PC-3 (cell line): ENCODE measurements at regions of chr21 and their contacts with region 1.

Region 1: DNA sequence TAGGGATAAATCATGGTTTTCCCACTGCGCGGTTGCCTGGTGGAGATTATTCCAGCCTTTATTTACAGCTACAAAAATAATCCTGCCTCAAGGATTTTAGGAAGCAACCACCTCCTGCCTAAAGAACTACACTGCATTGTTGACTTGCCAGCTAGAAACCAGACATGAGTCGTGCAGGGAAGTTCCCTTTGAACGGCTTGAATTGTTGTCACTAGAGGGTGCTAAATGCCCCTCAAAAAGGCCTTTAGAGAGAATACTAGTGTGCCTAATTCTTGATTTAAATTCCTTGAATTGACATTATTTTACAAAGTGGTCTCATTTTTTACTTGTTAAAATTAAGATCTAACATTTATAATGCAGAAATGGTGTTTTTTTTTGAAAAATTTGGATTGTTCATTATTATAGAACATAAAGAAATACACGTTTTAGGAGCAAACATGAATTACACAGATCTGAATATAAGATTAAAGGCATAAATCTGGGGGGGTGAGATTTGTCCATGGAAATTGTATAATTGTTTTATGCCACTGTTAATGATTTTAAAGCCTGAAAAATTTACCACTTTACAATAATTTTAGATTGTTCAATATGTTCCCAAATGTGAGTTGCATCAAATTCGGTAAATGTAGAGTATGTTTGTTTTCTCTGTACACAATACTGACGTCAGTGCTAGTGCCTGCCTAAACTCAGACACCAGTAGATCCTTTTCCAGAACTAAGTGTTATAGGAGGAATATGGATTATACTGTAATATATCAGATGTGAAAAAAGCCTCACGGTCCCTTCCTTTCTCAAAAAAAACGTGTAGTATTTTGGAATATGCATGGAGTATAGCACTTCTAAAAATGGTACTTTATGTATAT is 7.6 kb upstream of the ERG start:
- DNase-seq: peak; percentile 85
- ATAC-seq: peak; percentile 99
- H3K4me3 ChIP-seq: no peak overlapping the region
- H3K27ac ChIP-seq: no peak overlapping the region
- H3K4me1 ChIP-seq: no peaks in the 10 kb centered on the region
- H3K27me3 ChIP-seq: peaks cover 42% of the 10 kb centered on the region
- CTCF ChIP-seq: peak; percentile 83

Region 2: DNA sequence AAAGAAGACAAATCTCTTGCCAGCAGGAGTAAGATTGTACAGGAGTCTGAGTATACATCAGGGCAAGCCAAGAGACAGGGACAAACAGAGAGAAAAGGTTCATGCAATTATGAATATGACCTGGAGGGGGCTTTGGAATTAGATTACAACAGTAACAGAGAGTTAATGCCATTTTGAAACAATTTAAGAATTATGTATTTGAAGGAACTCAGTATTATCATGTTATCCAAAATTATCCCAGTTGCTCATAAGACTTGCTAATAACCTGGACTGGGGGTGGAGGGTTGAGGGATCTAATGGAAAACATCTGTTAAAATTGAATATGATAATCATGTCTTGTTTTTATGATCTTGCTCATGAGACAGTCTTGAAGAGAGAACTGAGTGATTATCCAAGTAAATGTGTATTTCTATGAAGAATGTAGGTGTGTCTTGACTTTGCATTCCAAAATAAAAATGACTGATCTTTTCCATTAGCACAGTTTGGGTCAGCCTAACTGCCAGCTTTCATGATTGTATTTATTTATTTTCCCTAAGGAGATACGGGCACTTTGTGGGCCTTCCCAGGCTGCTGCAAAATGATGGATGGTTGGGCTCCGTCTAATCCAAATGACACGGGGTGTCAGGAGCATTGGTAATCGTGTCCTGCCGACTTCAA is 125.3 kb before region 1 on chr21:
- CTCF ChIA-PET with region 1: no interaction called
- POLR2A ChIA-PET with region 1: no interaction called
- intact Hi-C with region 1: no loop called
- DNase-seq: peak; percentile 52
- ATAC-seq: peak; percentile 46; the same call in 1 of the 2 replicates
- H3K4me3 ChIP-seq: no peak overlapping the region
- H3K27ac ChIP-seq: no peak overlapping the region
- H3K4me1 ChIP-seq: no peaks in the 10 kb centered on the region
- H3K27me3 ChIP-seq: peaks cover 51% of the 10 kb centered on the region
- CTCF ChIP-seq: peak; percentile 58

Region 3: DNA sequence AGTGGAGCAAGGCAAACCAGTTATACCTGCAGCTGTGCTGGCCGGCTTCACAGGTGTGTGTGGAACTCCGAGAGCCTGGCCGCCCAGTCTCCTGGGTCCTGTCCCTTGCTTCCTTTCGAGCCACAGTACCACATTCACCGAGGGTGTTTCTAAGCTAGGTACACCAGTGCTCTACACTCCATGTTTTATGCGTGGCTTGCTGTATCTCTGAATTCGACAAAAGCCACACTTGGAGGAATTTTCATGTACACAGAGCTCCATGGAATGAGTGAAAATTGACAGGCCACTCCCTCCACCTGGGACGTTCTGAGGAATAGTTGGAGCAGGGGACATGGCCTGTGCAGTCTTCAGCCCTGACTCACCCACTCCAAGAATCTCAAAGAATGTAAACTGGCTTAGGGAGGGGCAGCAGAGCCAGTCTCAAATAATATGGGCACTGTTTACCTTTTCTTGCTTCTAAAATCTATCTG is 313.9 kb after region 1 on chr21:
- CTCF ChIA-PET with region 1: no interaction called
- POLR2A ChIA-PET with region 1: no interaction called
- intact Hi-C with region 1: no loop called
- DNase-seq: peak; percentile 95
- ATAC-seq: peak; percentile 92
- H3K4me3 ChIP-seq: peak overlapping the region; percentile 29
- H3K27ac ChIP-seq: peak overlapping the region; percentile 56
- H3K4me1 ChIP-seq: peaks cover 56% of the 10 kb centered on the region
- H3K27me3 ChIP-seq: no peaks in the 10 kb centered on the region
- CTCF ChIP-seq: no peak

Region 4: GRCh38 chr21:39175154-39175553 is 669.3 kb after region 1 on chr21:
- CTCF ChIA-PET with region 1: no interaction called
- POLR2A ChIA-PET with region 1: no interaction called
- intact Hi-C with region 1: loop called (anchors 1 kb)
- DNase-seq: peak; percentile 63
- ATAC-seq: no peak
- H3K4me3 ChIP-seq: no peak overlapping the region
- H3K27ac ChIP-seq: no peak overlapping the region
- H3K4me1 ChIP-seq: no peaks in the 10 kb centered on the region
- H3K27me3 ChIP-seq: no peaks in the 10 kb centered on the region
- CTCF ChIP-seq: peak; percentile 45